CD8-positive, alpha-beta T cell (primary cell): ENCODE measurements at regions of chrX and their contacts with region 1.

Region 1: DNA sequence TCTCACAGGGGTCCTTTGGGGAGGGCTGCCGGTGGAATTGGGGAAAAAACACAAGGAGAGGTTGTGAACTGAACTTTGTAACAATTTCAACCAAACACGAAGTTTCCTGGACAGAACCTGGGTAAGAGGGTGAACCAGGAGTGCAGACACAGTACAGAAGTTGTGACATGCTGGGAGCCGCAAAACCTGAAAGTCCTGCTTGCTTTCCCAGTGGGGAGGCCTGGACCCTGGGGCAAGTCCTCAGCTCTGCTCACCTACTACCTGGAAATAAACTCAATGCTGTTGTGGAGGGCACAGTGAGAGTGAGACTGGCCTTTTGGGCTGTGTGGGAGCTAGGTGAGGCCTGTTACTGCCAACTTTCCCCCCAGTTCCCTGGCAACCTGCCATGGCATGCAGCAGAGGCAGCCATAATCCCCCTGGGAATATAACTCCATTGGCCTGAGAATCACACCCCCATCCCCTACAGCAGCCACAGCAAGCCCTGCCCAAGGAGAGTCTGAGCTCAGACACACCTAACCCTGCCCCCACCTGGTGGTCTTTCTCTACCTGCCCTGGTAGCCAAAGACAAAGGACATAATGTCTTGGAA is 162.8 kb downstream of the THOC2 start:
- DNase-seq: no peak
- ATAC-seq: no peak
- H3K4me3 ChIP-seq: no peak overlapping the region
- H3K4me3 Mint-ChIP-seq: no peak overlapping the region
- H3K27ac ChIP-seq: no peak overlapping the region
- H3K27ac Mint-ChIP-seq: no peak overlapping the region
- H3K4me1 ChIP-seq: no peaks in the 10 kb centered on the region
- H3K4me1 Mint-ChIP-seq: no peaks in the 10 kb centered on the region
- H3K27me3 ChIP-seq: no peaks in the 10 kb centered on the region
- H3K27me3 Mint-ChIP-seq: no peaks in the 10 kb centered on the region
- CTCF ChIP-seq: no peak

Region 2: GRCh38 chrX:123504047-123504446 is 66.0 kb before region 1 on chrX:
- CTCF ChIA-PET with region 1: no interaction called
- POLR2A ChIA-PET with region 1: no interaction called
- intact Hi-C with region 1: loop called in 1 of 2 experiments (anchors 2 kb)
- DNase-seq: no peak
- ATAC-seq: no peak
- H3K4me3 ChIP-seq: no peak overlapping the region
- H3K4me3 Mint-ChIP-seq: no peak overlapping the region
- H3K27ac ChIP-seq: no peak overlapping the region
- H3K27ac Mint-ChIP-seq: no peak overlapping the region
- H3K4me1 ChIP-seq: no peaks in the 10 kb centered on the region
- H3K4me1 Mint-ChIP-seq: no peaks in the 10 kb centered on the region
- H3K27me3 ChIP-seq: no peaks in the 10 kb centered on the region
- H3K27me3 Mint-ChIP-seq: peaks cover 7% of the 10 kb centered on the region
- CTCF ChIP-seq: no peak